ENCODE measurements at regions of chr20 and their contacts with region 1.

Region 1: DNA sequence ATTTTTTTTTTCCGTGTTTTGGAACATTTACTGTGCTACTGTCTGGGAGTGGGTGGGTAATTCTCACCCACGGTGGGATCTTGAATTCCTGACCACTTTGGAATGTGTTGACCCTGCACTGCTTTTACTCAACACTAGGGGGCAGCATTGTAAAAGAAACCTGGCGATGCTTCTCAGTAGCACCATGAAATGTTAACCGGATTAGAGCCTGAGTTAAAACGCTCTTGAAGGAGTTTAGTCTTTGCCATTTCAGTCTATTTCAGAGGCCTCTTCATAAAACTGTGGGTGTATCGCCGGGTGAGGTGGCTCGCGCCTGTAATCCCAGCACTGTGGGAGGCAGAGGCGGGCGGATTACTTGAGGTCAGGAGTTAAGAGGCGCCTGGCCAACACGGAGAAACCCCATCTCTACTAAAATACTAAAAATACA is 114.4 kb upstream of the PRND start:
- DNase-seq: peak; percentile 37
- ATAC-seq: peak; percentile 94
- H3K4me3 ChIP-seq: no peak overlapping the region
- H3K27ac ChIP-seq: no peak overlapping the region
- H3K4me1 ChIP-seq: peaks cover 6% of the 10 kb centered on the region
- H3K27me3 ChIP-seq: no peaks in the 10 kb centered on the region
- CTCF ChIP-seq: peak; percentile 85 to 91 (median 91)
- EP300 ChIP-seq: no peak
- POLR2A ChIP-seq: no peak
- RAD21 ChIP-seq: peak; percentile 100

Region 2: DNA sequence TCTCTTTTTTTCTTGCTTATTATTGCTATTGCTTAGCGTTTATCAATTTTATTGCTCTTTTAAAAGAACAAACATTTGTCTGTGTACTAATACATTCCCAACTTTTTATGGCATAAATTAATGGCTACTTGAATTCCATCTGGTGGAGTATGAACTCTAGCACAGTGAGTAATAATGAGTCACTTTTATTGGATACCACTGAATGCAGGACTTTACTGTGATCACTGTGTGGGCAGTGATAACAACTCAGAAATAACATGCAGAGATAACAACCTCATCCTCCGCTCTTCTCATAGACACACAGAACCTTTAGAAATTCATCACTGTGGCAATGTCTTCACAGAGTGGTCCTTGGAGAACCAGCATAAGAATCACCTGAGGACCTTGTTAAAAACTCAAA is 60.5 kb before region 1 on chr20:
- CTCF ChIA-PET with region 1: no interaction called
- POLR2A ChIA-PET with region 1: no interaction called
- RAD21 ChIA-PET with region 1: no interaction called
- SMC1A ChIA-PET with region 1: no interaction called
- in situ Hi-C with region 1: no loop called
- intact Hi-C with region 1: no loop called
- DNase-seq: no peak
- ATAC-seq: no peak
- H3K4me3 ChIP-seq: no peak overlapping the region
- H3K27ac ChIP-seq: no peak overlapping the region
- H3K4me1 ChIP-seq: no peaks in the 10 kb centered on the region
- H3K27me3 ChIP-seq: no peaks in the 10 kb centered on the region; a peak in 1 of 4 replicates
- CTCF ChIP-seq: no peak
- EP300 ChIP-seq: no peak
- POLR2A ChIP-seq: no peak
- RAD21 ChIP-seq: no peak

Region 3: DNA sequence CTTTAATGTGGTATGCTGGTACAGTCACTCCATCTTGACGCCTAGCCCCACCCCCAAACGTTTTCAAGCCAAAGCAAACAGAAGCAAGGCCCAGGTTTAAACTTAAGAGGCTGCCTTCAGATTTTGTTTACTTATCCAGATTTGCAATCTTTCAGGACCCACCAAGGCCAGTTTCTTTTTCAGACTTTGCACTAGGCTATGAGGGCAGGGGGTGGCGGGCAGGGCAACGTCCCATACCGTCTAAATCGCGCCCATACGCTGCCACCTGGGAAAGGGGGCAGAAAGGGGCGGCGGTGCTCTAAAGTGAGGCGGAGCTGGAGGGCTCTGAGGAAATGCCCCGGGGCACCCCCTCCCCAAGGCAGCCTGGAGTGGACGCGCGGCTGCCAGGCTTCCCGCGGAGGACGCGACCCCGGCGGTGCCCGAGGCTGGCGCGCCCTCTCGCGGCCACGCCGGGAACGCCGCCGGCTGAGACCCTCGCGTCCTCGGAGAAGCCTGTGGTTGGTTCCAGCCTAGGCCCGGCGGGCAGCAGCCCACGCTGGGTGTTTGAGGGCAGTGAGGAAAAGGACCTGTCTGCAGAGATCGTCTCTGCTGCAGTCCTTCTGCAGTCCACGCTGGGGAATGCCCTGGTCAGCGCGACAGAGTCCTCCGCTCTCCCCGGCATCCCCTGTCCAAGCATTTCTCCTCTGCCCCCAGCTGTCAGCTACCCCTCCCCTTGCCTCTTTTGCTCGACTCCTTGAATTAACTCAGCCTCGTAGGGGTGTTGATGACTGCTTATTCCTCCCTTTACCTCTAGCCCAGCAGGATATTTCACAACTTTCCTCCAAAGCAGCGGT is 14.8 kb before region 1 on chr20:
- CTCF ChIA-PET with region 1: interaction called, 10 read pairs
- POLR2A ChIA-PET with region 1: no interaction called
- RAD21 ChIA-PET with region 1: interaction called, 13 read pairs
- SMC1A ChIA-PET with region 1: interaction called, 3 read pairs
- in situ Hi-C with region 1: no loop called
- intact Hi-C with region 1: no loop called
- DNase-seq: no peak
- ATAC-seq: peak; percentile 87
- H3K4me3 ChIP-seq: no peak overlapping the region
- H3K27ac ChIP-seq: no peak overlapping the region
- H3K4me1 ChIP-seq: no peaks in the 10 kb centered on the region
- H3K27me3 ChIP-seq: no peaks in the 10 kb centered on the region
- CTCF ChIP-seq: peak; percentile 69 to 77 (median 74); a peak in 5 of 6 replicates
- EP300 ChIP-seq: no peak
- POLR2A ChIP-seq: no peak
- RAD21 ChIP-seq: peak; percentile 71

Region 4: DNA sequence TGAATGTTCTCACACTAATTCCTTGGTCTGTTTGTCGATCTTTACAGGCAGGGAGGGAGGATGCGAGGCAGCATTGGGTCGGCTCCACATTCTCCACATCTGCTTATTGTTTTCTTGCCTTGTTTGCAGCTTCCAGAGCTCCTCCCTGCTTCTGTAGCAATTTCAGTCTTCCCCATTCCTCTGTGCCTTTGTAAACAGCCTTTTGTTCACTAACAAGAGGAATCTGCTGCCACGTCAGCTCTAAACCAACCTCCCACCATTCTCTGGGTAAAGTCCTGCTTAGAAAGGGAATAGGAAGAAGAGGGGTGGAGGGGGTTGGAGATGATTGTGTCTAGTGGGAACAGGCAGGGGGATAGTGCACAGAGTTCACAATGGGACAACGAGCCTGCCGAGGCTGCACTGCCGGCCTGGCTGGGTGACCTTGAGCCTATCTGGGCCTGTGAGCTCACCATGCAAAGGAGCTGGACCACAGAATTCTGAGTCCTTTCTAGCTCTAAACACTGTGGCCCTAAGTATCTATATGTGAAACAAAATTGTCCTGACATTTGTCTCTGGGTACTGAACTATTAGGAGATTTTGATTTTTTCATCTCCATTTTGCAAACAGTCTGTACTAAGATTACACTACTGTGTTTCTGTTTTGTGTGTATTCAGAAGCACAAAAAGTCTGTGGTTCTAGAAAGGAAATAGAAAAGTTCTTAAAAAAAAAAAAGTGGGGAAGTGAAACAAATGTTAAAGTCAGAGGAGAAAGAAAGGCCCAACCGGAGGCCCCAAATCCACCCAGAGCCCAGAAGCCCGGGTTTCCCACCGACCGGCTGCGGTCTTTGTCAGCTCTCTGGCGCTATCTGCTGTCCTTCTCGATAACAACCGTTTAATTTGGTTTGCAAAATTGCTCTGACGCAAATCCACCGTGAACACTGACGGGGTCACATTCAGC is 113.0 kb after region 1 on chr20:
- CTCF ChIA-PET with region 1: interaction called, 199 read pairs
- POLR2A ChIA-PET with region 1: no interaction called
- RAD21 ChIA-PET with region 1: interaction called, 36 read pairs
- SMC1A ChIA-PET with region 1: interaction called, 32 read pairs
- in situ Hi-C with region 1: loop called (anchors 5 kb)
- intact Hi-C with region 1: loop called (anchors 1 kb)
- DNase-seq: peak; percentile 71
- ATAC-seq: peak; percentile 96
- H3K4me3 ChIP-seq: peak overlapping the region; percentile 19; the same call in 1 of the 2 replicates
- H3K27ac ChIP-seq: peak overlapping the region; percentile 67
- H3K4me1 ChIP-seq: peaks cover 17% of the 10 kb centered on the region
- H3K27me3 ChIP-seq: no peaks in the 10 kb centered on the region
- CTCF ChIP-seq: peak; percentile 65 to 86 (median 72); a peak in 5 of 6 replicates
- EP300 ChIP-seq: peak in 1 of 2 experiments; percentile 45; a peak in 1 of 4 replicates
- POLR2A ChIP-seq: peak; percentile 37; the same call in 1 of the 2 replicates
- RAD21 ChIP-seq: peak; percentile 96

Region 5: DNA sequence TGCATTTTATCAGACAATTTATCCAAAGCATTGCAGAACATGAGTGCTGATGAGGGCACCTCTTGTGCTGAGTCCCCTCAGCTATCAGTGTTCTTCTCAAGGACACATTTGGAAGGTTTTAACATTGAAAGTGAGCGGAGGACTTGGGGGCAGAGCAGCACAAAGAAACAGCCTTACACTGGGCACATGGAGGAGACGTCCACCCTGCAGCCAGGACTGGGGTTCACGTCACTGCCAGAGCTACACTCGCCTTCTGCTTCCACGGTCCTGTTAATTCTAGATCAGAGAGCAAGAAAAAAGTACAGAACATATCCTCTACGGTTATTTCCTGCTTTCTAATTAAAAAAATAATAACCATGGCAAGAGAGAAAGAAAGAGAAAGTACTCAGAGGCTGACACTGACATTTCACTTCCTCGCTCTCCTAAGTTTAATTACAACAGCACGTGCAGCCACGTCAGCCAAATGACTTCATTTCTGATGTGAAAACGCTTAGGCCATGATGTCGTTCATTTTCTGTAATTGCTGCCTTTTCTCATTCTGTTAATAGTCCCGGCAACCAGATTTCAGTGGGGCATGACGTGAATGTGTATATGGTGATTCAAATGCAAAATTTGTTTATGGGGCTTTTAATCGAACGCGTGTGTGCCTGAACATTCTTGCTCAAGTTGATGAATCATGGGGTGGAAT is 119.6 kb after region 1 on chr20:
- CTCF ChIA-PET with region 1: interaction called, 199 read pairs
- POLR2A ChIA-PET with region 1: no interaction called
- RAD21 ChIA-PET with region 1: interaction called, 36 read pairs
- SMC1A ChIA-PET with region 1: interaction called, 13 read pairs
- in situ Hi-C with region 1: loop called (anchors 5 kb)
- intact Hi-C with region 1: no loop called
- DNase-seq: peak; percentile 24
- ATAC-seq: peak; percentile 77
- H3K4me3 ChIP-seq: peak overlapping the region; percentile 33; the same call in 1 of the 2 replicates
- H3K27ac ChIP-seq: no peak overlapping the region
- H3K4me1 ChIP-seq: peaks cover 7% of the 10 kb centered on the region; the same call in 1 of the 2 replicates
- H3K27me3 ChIP-seq: no peaks in the 10 kb centered on the region; a peak in 1 of 4 replicates
- CTCF ChIP-seq: no peak
- EP300 ChIP-seq: no peak
- POLR2A ChIP-seq: no peak
- RAD21 ChIP-seq: no peak

Region 6: DNA sequence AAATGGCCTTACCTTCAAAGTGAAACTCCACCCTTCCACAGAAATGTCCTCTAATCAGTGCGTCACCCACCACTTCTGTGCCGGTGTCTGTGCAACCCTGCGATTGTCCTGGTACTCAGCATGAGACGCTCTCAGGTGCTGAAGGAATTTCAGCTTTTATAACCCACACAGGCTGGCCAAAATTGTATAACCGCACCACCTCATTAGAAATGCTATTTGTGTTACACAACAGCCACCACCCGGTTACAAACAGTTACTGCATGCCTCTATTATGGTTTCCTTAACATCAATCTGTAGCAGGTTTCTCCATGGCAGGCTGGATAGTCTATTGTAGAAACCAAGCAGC is 342.5 kb after region 1 on chr20:
- CTCF ChIA-PET with region 1: no interaction called
- POLR2A ChIA-PET with region 1: no interaction called
- RAD21 ChIA-PET with region 1: interaction called, 3 read pairs
- SMC1A ChIA-PET with region 1: interaction called, 4 read pairs
- in situ Hi-C with region 1: no loop called
- intact Hi-C with region 1: loop called (anchors 5 kb)
- DNase-seq: no peak
- ATAC-seq: peak; percentile 82
- H3K4me3 ChIP-seq: 0 out of 2 replicates have a peak overlapping the region, but pooled peaks have one; percentile 37
- H3K27ac ChIP-seq: peak overlapping the region; percentile 24; the same call in 1 of the 2 replicates
- H3K4me1 ChIP-seq: peaks cover 21% of the 10 kb centered on the region
- H3K27me3 ChIP-seq: no peaks in the 10 kb centered on the region
- CTCF ChIP-seq: peak; percentile 60 to 82 (median 72); a peak in 5 of 6 replicates
- EP300 ChIP-seq: no peak
- POLR2A ChIP-seq: no peak
- RAD21 ChIP-seq: peak; percentile 85

Region 7: GRCh38 chr20:5222919-5223634 is 615.8 kb after region 1 on chr20:
- CTCF ChIA-PET with region 1: interaction called, 3 read pairs
- POLR2A ChIA-PET with region 1: no interaction called
- RAD21 ChIA-PET with region 1: no interaction called
- SMC1A ChIA-PET with region 1: no interaction called
- in situ Hi-C with region 1: no loop called
- intact Hi-C with region 1: loop called (anchors 10 kb)
- DNase-seq: peak; percentile 13
- ATAC-seq: peak; percentile 92
- H3K4me3 ChIP-seq: no peak overlapping the region
- H3K27ac ChIP-seq: no peak overlapping the region
- H3K4me1 ChIP-seq: no peaks in the 10 kb centered on the region
- H3K27me3 ChIP-seq: no peaks in the 10 kb centered on the region
- CTCF ChIP-seq: peak; percentile 75 to 94 (median 91)
- EP300 ChIP-seq: no peak
- POLR2A ChIP-seq: no peak
- RAD21 ChIP-seq: peak; percentile 75